ENCODE measurements at regions of chr22 and their contacts with region 1.

Region 1: DNA sequence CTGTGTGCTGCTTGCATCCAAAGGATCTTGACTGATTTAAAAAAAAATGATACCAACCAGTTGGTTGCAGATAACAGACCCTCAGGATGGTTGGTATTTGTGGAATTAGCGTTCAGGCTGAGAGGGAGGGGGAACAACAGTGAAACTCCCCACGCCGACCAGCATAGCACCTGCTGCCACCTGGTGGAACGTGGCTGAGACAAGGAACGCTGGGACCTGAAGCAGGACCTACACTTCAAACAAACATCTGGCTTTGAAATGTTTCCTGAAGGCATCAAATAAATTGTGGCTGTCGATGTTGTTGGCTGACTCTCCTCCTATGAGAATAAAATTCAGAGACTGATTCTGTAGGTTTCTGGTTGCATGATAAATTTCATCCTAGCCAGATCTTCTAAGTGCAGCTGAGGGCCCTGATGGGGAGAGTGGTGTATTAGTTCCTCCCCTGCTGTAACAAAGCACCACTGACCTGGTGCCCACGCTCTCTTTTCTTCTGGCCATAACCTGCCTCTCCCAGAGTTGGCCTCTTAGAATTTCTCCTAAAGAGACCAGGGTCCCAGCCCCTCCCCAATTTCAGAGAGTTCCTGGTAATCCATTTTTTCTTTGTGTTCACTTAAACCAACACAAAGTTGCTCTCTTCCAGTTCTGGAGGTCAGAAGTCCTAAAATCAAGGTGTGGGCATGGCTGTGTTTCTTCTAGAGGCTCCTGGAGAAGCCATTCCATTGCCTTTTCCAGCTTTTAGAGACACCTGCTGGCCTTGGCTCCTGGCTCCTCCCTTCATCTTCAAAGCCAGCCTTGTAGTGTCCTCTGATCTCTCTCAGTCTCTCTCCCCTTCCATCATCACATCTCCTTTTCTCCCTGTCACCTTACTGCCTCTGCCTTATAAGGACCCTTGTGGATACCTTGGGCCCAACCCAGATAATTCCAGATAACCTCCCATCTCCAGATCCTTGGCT is 17.3 kb downstream of the APOL2 start:
- DNase-seq: peak; percentile 53 to 68
- H3K4me3 ChIP-seq: no peak overlapping the region
- H3K4me3 Mint-ChIP-seq: no peak overlapping the region
- H3K27ac Mint-ChIP-seq: no peak overlapping the region
- H3K4me1 ChIP-seq: no peaks in the 10 kb centered on the region
- H3K4me1 Mint-ChIP-seq: peaks cover 24% of the 10 kb centered on the region
- H3K27me3 ChIP-seq: no peaks in the 10 kb centered on the region
- H3K27me3 Mint-ChIP-seq: peaks cover 6% of the 10 kb centered on the region
- CTCF ChIP-seq: peak; percentile 64 to 92

Region 2: DNA sequence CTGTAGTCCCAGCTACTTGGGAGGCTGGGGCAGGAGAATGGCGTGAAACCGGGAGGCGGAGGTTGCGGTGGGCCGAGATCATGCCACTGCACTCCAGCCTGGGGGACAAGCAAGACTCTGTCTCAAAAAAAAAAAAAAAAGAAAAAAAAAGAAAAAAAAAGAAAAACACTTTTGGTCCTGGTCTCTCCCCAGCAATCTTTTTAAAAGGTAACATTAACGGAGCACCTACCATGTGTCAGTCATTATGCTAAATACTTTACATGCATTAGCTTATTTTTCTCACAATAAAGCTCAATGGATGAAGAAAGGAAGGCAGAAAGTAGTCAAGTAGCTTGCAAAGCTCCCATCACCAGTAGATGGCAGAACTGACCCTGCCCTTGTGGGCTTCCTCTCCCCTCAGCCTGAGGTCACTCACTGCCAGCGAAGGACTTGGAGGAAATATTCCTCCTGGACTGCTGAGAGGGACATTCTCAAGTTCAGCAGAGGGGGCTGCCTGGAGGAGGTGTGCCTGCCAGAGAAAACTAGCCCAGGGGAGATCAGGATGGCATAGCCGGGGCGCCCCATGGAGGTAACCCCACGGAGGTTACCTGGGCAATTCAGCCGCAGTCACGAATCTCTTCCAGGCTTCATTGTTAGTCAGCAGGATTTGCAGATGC is 77.1 kb before region 1 on chr22:
- CTCF ChIA-PET with region 1: no interaction called
- POLR2A ChIA-PET with region 1: no interaction called
- intact Hi-C with region 1: loop called (anchors 1 kb)
- DNase-seq: peak; percentile 69 to 70
- H3K4me3 ChIP-seq: no peak overlapping the region
- H3K4me3 Mint-ChIP-seq: no peak overlapping the region
- H3K27ac Mint-ChIP-seq: no peak overlapping the region
- H3K4me1 ChIP-seq: no peaks in the 10 kb centered on the region
- H3K4me1 Mint-ChIP-seq: no peaks in the 10 kb centered on the region
- H3K27me3 ChIP-seq: no peaks in the 10 kb centered on the region
- H3K27me3 Mint-ChIP-seq: no peaks in the 10 kb centered on the region
- CTCF ChIP-seq: peak; percentile 71 to 77

Region 3: DNA sequence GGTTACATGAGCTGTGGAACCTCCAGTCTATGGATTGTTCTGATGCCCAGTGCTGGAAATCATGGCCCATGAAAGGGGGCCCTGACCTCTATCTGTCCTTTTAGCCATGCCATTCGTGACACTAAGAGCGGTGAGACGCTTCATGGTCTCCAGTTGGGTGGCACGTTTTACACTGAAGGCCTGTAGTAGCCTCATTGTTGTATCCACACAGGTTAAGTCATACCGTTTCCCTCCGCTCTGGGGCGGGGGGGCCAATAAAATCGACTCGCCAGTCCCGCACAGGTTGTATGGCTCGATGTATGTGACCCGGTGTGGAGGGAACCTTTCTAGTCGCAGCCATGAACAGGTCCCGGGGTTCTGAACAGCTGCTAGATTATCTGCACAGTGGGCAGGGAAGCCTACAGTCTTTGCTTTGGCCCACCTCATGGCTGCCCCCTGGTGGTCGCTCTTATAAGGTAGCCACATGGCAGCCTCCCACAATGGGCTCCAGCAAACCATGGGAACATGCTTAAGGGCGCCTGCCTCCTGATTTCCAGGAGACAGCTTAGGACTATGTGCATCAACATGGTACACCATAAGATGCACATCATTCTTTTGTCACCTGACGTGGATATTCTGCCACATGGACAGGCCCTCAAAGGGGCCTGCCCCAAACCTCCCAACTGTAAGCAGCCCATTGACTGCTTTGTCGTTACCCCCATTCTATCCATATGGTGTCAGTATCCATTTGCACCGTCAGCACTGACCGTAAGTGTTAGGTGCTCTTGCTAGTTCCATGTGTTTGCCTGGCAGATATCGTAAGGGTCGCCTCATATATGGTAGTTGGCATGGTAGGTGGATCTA is 41.8 kb before region 1 on chr22:
- CTCF ChIA-PET with region 1: no interaction called
- POLR2A ChIA-PET with region 1: no interaction called
- intact Hi-C with region 1: loop called (anchors 5 kb)
- DNase-seq: peak; percentile 68 to 82
- H3K4me3 ChIP-seq: no peak overlapping the region
- H3K4me3 Mint-ChIP-seq: no peak overlapping the region
- H3K27ac Mint-ChIP-seq: no peak overlapping the region
- H3K4me1 ChIP-seq: no peaks in the 10 kb centered on the region
- H3K4me1 Mint-ChIP-seq: no peaks in the 10 kb centered on the region
- H3K27me3 ChIP-seq: no peaks in the 10 kb centered on the region
- H3K27me3 Mint-ChIP-seq: no peaks in the 10 kb centered on the region
- CTCF ChIP-seq: peak; percentile 75 to 77

Region 4: DNA sequence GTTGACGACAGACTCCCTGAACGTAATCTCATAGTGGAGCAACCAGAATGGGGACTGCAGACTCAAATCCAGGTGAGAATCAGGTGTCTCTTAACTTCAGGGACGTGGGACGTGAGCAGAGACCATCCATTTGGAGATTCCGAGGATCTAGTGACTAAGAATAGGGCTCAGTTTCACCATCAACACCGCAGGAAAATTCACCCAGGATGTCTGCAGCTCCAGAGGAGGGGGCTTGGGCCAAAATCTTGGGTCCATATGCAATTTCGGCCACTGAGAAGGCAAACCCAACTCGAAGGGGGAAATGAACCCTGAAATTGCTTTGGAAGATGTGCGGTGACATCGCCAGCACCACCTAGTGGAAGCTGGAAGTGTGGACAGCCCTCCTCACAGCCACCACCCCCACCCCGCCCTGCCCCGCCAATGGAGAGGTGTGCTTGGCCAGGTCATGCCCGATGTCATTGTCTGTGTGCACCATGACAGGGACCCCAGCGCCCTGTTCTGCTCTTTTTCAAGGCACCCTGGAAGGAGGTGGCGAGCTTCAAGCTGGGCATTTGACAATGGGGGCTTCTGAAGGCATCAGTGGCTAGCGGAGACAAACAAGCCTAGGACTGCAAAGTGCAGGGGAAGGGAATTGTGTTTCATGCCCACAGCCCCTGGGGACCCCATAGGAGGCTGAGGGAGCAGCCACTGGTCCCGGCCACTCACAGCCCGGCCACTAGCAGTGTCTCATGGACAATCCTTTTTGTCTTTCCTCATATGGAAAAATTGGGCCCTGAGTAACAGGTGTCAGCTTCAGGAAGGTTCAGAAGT is 55.6 kb after region 1 on chr22:
- CTCF ChIA-PET with region 1: no interaction called
- POLR2A ChIA-PET with region 1: no interaction called
- intact Hi-C with region 1: loop called (anchors 10 kb)
- DNase-seq: peak; percentile 60 to 64
- H3K4me3 ChIP-seq: no peak overlapping the region
- H3K4me3 Mint-ChIP-seq: peak overlapping the region; percentile 29
- H3K27ac Mint-ChIP-seq: peak overlapping the region; percentile 51
- H3K4me1 ChIP-seq: no peaks in the 10 kb centered on the region
- H3K4me1 Mint-ChIP-seq: peaks cover 6% of the 10 kb centered on the region
- H3K27me3 ChIP-seq: no peaks in the 10 kb centered on the region
- H3K27me3 Mint-ChIP-seq: no peaks in the 10 kb centered on the region
- CTCF ChIP-seq: peak; percentile 73 to 76